K562 (cell line): ENCODE measurements at regions of chrX and their contacts with region 1.

Region 1: DNA sequence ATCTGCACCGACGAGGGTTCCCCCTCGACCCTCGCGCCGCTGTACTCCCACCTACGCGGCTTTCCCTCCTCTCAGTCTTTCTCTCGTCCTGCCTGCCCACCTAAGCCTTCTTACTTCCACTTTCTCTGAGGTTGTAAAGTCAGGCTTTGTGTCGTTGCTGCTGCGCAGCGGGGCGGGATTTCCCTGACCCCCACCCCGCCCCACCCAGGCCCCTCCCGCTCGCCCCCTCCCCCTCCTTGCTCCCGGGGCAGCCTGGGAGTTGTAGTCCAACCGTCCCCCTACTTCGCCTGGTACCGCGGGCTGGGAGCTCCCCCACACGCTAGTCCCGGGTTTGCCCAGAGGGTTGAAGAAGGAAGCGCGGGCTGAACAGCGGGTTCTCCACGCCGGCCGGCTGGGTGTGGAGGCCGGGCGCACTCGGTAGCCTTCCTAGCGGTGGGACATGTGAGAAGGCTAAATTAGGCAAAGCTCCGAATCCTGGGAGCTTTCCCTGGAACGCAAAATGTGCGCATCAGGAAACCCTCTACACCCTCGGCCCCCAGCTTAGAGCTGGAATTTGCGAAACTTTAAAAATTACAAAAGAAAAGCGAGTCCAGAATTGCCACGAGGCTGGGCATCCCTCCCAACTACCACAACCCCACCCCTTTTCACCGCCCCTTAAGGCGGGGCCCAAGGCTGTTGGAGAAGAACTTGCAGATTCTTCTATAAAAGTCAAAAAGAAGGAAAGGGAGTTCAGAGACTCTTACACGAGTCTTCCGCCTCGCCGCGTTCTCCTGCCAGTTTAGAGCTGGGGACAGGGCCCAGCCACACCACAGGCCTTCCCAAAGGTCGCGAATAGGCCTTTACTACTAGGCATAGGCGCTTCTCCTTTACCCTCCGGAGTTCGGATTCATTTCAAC is at the start of gene ATP11C:
- DNase-seq: peak; percentile 82 to 90 (median 84)
- ATAC-seq: peak; percentile 81
- H3K4me3 ChIP-seq: peak within 1 kb of the TSS; percentile 83
- H3K27ac ChIP-seq: peak within 1 kb of the TSS; percentile 95
- H3K4me1 ChIP-seq: peaks cover 4 to 11% of the 10 kb centered on the region in 2 experiments; a peak in 4 of 5 replicates
- H3K27me3 ChIP-seq: no peaks in the 10 kb centered on the region
- CTCF ChIP-seq: peak in 2 of 3 experiments; percentile 18 to 28; a peak in 1 of 6 replicates
- EP300 ChIP-seq: no peak; the same call in 1 of the 2 replicates
- POLR2A ChIP-seq: peak; percentile 76
- RAD21 ChIP-seq: no peak
- polyA plus RNA-seq, gene ATP11C: 18.2 to 18.9 TPM

Region 2: DNA sequence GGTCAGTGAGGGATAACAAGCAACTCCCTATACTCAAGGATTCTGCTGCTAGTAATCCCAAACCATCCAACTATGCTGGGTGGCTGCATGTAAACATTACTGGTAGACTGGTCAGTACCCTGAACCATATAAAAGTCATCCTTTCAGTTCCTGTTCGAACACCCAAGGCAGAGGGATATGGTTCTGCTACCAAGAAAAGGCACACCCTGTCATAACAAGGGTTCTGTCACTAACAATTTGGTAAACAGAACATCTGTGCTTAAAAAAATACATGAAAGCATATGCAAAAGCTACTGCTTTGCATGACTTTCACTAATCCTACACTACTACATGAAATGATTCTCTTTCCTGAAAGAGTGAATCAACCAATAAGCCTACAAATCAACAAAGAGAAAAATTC is 148.3 kb before region 1 on chrX:
- CTCF ChIA-PET with region 1: no interaction called
- POLR2A ChIA-PET with region 1: no interaction called
- in situ Hi-C with region 1: no loop called
- intact Hi-C with region 1: loop called (anchors 10 kb)
- DNase-seq: no peak
- ATAC-seq: no peak
- H3K4me3 ChIP-seq: no peak overlapping the region
- H3K27ac ChIP-seq: no peak overlapping the region
- H3K4me1 ChIP-seq: no peaks in the 10 kb centered on the region
- H3K27me3 ChIP-seq: no peaks in the 10 kb centered on the region
- CTCF ChIP-seq: no peak
- EP300 ChIP-seq: no peak
- POLR2A ChIP-seq: no peak
- RAD21 ChIP-seq: no peak

Region 3: GRCh38 chrX:139877710-139878414 is 55.3 kb before region 1 on chrX:
- CTCF ChIA-PET with region 1: no interaction called
- POLR2A ChIA-PET with region 1: interaction called, 3 read pairs
- in situ Hi-C with region 1: no loop called
- intact Hi-C with region 1: loop called (anchors 5 kb)
- DNase-seq: peak in 1 of 4 experiments; percentile 32
- ATAC-seq: peak; percentile 56
- H3K4me3 ChIP-seq: no peak overlapping the region
- H3K27ac ChIP-seq: peak overlapping the region; percentile 68; the same call in 2 of the 3 replicates
- H3K4me1 ChIP-seq: peaks cover 0 to 15% of the 10 kb centered on the region in 2 experiments; a peak in 4 of 5 replicates
- H3K27me3 ChIP-seq: no peaks in the 10 kb centered on the region
- CTCF ChIP-seq: no peak
- EP300 ChIP-seq: no peak; the same call in 1 of the 2 replicates
- POLR2A ChIP-seq: no peak
- RAD21 ChIP-seq: no peak